Activated T-helper 1 cell treated with anti-CD3 and anti-CD28 coated beads, Interleukin-12 subunit alpha, Interleukin-12 subunit beta, Interleukin-2, Interleukin-4 antibody, amounts not matched to agents 30 ng/mL and 10 ng/mL and 1 ng/mL, durations not matched to agents 14 hours and 24 hours and 36 hours (primary cell): ENCODE measurements at regions of chr4 and their contacts with region 1.

Region 1: GRCh38 chr4:18689308-18690115 is 668.0 kb upstream of the LCORL start:
- DNase-seq: peak; percentile 3
- H3K4me3 Mint-ChIP-seq: no peak overlapping the region
- H3K27ac Mint-ChIP-seq: no peak overlapping the region
- H3K4me1 Mint-ChIP-seq: no peaks in the 10 kb centered on the region
- H3K27me3 Mint-ChIP-seq: peaks cover 3% of the 10 kb centered on the region

Region 2: GRCh38 chr4:18556402-18556801 is 133.1 kb before region 1 on chr4:
- intact Hi-C with region 1: no loop called
- DNase-seq: no peak
- H3K4me3 Mint-ChIP-seq: no peak overlapping the region
- H3K27ac Mint-ChIP-seq: no peak overlapping the region
- H3K4me1 Mint-ChIP-seq: no peaks in the 10 kb centered on the region
- H3K27me3 Mint-ChIP-seq: peaks cover 1% of the 10 kb centered on the region

Region 3: DNA sequence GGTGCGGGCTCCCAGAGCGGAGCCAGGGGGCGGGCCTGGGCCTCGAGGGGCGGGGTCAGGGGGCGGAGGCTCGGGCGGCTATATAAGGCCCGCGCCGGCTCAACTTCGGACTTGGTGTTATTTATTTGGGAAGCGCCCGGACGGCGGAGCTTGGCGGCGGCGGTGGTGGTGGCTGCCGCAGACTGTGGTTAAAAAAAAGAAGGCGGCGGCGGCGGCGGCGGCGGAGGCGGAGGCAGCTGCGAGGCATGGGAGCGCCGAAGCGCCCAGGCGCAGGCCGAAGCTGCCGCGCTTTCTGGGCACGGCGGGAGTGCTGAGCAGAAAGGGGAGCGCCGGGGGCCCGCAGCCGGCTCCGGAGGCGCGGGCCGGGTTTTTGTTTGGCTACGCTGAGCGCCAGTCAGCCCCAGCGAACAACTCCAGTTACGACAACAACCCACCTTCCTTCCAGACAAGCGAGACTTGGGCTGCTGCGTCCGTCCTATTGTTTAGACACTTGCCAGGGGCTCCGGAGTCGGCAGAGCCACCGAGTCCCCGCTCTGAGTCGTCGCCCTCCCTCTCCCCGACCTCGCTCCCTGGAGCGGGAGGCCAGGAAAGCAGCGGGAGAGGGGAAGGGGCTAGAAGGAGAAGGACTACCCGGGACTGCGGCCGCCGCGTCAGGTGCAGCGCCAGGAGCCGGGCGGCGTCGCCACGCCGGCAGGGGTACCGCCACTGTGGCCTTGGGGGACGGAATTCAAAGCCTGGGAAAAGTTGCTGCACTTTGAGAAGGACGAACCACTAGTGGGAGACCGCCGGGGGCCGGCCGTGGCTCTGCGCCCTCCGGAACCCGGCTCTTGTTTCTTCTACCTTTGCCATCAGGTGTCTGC is 1562.5 kb after region 1 on chr4 and contains the start of gene SLIT2:
- intact Hi-C with region 1: loop called (anchors 10 kb)
- DNase-seq: no peak
- H3K4me3 Mint-ChIP-seq: peak within 1 kb of the TSS; percentile 30
- H3K27ac Mint-ChIP-seq: peak within 1 kb of the TSS; percentile 55
- H3K4me1 Mint-ChIP-seq: peaks cover 6% of the 10 kb centered on the region
- H3K27me3 Mint-ChIP-seq: peaks cover 44% of the 10 kb centered on the region
- total RNA-seq, gene SLIT2: 0.07 and 0.13 TPM in 2 replicates